CD14-positive monocyte (primary cell): ENCODE measurements at regions of chr22 and their contacts with region 1.

Region 1: DNA sequence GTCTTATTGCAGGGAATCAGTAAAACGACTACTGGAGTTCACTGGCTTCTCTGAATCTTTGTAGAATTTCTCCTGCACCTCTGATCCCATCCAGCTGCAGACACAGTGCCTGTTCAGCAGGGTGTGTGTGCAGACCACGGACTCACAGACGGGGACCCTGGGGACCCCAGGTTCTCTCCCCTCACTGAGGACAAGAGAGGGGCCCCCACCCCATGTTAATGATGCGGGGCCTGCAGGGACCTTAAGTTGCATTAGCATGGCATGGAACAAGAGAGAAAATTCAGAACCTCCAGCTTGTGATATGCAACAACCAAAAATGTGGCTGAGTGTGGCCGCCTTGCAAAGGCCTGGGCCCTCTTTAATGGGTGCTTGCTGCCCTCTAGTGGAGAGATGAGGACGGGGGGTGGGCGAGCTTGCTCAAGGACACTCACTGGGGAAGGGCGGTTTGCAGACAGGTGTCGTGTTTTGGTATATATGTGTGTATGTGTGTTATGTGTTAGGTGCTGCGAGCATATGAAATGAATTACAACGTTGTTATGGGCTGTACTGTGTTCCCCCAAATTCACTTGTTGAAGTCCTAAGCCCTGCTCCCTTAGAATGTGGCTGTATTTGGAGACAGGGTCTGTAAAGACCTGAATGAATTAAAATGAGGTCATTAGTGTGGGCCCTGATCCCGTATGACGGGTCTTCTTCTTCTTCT is 84.4 kb upstream of the SEPTIN5 start:
- DNase-seq: peak; percentile 44 to 61 (median 59)
- H3K4me3 ChIP-seq: no peak overlapping the region
- H3K4me3 Mint-ChIP-seq: no peak overlapping the region
- H3K27ac ChIP-seq: no peak overlapping the region
- H3K27ac Mint-ChIP-seq: no peak overlapping the region
- H3K4me1 ChIP-seq: no peaks in the 10 kb centered on the region
- H3K4me1 Mint-ChIP-seq: peaks cover 2% of the 10 kb centered on the region
- H3K27me3 ChIP-seq: no peaks in the 10 kb centered on the region
- H3K27me3 Mint-ChIP-seq: peaks cover 2 to 18% (median 10%) of the 10 kb centered on the region in 3 donors
- CTCF ChIP-seq: peak; percentile 93

Region 2: DNA sequence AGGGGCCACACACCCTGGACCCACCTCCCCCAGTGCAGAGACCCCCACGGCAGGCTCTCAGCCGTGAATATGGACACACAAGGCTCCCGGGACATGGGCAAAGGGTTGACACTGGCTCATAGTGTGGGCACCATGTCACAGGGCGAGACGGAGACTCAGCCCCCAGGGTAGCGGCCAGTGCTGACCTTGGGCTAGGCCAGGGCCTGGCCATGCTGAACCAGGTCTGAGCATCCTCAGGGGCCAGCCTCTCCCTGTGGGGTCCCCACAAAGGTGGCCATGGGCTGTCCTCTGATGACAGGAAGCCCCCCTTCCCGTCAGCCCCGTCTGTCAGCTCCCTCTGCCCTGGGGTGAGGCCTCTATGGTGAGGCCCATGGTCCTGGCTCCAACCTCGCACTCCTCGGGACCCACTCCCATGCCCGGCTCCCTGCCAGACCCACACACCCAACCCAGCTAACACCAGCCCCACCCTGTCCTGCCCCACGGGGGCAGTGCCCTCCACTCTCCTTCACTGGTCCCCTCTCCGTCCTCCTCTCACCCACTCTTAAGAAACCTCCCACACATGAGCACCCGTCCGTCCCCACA is 674.8 kb before region 1 on chr22:
- intact Hi-C with region 1: loop called (anchors 5 kb)
- DNase-seq: no peak
- H3K4me3 ChIP-seq: no peak overlapping the region
- H3K4me3 Mint-ChIP-seq: no peak overlapping the region
- H3K27ac ChIP-seq: no peak overlapping the region
- H3K27ac Mint-ChIP-seq: no peak overlapping the region
- H3K4me1 ChIP-seq: no peaks in the 10 kb centered on the region
- H3K4me1 Mint-ChIP-seq: no peaks in the 10 kb centered on the region
- H3K27me3 ChIP-seq: no peaks in the 10 kb centered on the region
- H3K27me3 Mint-ChIP-seq: peaks cover 4 to 6% (median 5%) of the 10 kb centered on the region in 3 donors
- CTCF ChIP-seq: no peak

Region 3: GRCh38 chr22:19495562-19496323 is 134.1 kb before region 1 on chr22:
- intact Hi-C with region 1: loop called in 1 of 2 experiments (anchors 10 kb)
- DNase-seq: no peak
- H3K4me3 ChIP-seq: no peak overlapping the region
- H3K4me3 Mint-ChIP-seq: no peak overlapping the region
- H3K27ac ChIP-seq: no peak overlapping the region
- H3K27ac Mint-ChIP-seq: no peak overlapping the region
- H3K4me1 ChIP-seq: no peaks in the 10 kb centered on the region
- H3K4me1 Mint-ChIP-seq: no peaks in the 10 kb centered on the region
- H3K27me3 ChIP-seq: no peaks in the 10 kb centered on the region
- H3K27me3 Mint-ChIP-seq: no peaks in the 10 kb centered on the region
- CTCF ChIP-seq: no peak